RWPE1 (cell line): ENCODE measurements at regions of chr11 and their contacts with region 1.

Region 1: DNA sequence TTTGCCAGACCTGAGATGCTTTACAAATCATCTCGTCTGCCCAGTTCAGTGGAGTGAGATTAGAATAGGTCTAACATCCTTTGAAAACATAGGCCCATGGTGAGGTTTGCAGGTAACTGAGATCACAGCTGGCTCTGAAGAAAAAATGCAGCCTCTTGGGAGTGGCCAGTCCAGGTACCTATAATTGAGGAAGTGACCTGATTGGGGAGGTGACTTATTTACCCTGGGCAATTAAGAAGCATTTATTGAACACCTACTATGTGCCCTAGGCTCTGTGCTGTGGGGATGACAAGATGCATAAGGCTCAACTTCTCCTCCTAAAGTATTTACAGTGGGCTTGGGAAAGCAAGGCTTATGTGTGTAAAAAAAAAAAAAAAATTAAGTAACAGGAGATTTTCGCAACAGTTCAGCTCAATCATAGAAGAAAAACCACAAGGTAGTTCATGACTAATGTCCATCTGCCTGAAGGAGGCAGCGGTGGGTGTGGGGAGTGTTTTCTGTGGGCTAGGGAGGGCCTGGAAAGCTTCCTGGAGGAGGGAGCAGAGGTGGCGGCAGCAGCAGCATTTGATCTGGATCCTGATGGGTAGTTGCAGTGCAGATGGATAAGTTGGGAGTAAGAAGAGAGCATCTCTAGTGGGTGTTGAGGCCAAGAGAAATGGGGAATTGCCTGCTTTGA is 16.1 kb downstream of the MICAL2 start:
- DNase-seq: peak; percentile 60
- H3K27ac ChIP-seq: peak overlapping the region; percentile 72
- CTCF ChIP-seq: no peak

Region 2: DNA sequence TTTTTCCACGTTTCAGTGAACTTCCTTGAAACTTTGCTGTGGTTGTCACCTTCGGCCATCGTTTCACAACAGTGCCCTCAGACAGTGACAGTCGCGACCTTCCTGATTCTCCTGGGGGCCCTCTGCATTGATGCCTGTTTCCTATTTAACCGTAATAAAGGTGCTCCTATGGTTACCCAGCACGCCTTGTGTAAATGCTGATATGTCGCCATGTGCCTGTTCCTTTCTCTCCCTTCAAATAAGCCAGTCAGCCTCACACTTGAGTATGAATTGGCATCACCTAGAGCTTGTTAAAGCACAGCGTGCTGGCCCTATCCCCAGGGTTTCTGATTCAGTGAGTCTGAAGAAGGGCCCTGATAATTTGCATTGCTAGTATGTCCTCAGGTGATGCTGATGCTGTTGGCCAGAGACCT is 88.7 kb after region 1 on chr11:
- CTCF ChIA-PET with region 1: no interaction called
- POLR2A ChIA-PET with region 1: interaction called, 15 read pairs
- DNase-seq: no peak
- H3K27ac ChIP-seq: no peak overlapping the region
- CTCF ChIP-seq: no peak

Region 3: GRCh38 chr11:12269104-12269441 is 142.6 kb after region 1 on chr11:
- CTCF ChIA-PET with region 1: no interaction called
- POLR2A ChIA-PET with region 1: no interaction called
- DNase-seq: peak; percentile 37
- H3K27ac ChIP-seq: peak overlapping the region; percentile 75
- CTCF ChIP-seq: no peak